Stomach (tissue), 19 donors: ENCODE measurements at regions of chr5 and their contacts with region 1.

Region 1: GRCh38 chr5:172293054-172293744 is 9.6 kb upstream of the UBTD2 start:
- DNase-seq: peak; percentile 68 to 89
- H3K4me3 ChIP-seq: no peak overlapping the region
- H3K27ac ChIP-seq: no peak overlapping the region
- H3K4me1 ChIP-seq: peaks cover 0 to 11% (median 4%) of the 10 kb centered on the region in 4 donors
- H3K27me3 ChIP-seq: no peaks in the 10 kb centered on the region
- CTCF ChIP-seq: peak in 5 of 7 experiments; percentile 61 to 73 (median 67)
- EP300 ChIP-seq: no peak
- POLR2A ChIP-seq: no peak

Region 2: DNA sequence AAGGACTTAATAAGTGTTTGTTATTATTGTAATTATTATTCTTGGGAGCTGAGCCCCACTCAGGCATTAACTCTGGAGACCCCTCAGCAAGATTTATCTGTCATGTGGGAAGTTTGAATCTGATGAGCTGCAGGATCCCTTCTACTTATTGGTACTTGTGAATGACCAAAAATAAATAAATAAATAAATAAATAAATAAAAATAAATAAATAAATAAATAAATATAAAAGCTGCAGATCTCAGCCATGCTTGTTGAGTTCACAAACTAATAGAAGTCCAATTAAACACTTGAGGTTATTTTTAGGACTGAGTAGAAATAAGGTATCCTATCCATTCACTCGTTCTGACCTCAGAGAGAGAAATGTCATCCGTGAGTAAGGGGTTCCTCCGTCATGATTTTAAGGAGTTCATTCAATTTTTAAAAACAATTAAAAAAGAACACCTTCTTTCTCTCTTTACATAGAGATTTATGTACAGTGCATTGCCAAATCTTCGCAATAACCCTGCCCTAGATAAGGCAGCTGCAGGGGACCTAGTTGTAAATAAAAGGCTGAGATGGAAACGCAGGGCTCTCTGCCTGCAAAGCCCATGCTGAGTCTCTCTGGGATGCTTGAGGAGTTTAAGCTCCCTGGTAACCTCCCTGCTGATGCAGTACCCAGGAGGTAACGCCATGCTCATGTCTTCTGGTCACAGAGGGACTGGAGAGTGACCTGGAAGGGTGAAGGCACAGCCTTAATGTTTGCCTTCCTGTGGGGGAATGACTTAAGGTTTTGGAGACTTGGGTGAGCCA is 98.0 kb before region 1 on chr5:
- intact Hi-C with region 1: loop called (anchors 10 kb)
- DNase-seq: no peak
- H3K4me3 ChIP-seq: no peak overlapping the region
- H3K27ac ChIP-seq: no peak overlapping the region
- H3K4me1 ChIP-seq: peaks cover 0 to 4% (median 0%) of the 10 kb centered on the region in 4 donors
- H3K27me3 ChIP-seq: no peaks in the 10 kb centered on the region
- CTCF ChIP-seq: no peak
- EP300 ChIP-seq: no peak
- POLR2A ChIP-seq: no peak

Region 3: DNA sequence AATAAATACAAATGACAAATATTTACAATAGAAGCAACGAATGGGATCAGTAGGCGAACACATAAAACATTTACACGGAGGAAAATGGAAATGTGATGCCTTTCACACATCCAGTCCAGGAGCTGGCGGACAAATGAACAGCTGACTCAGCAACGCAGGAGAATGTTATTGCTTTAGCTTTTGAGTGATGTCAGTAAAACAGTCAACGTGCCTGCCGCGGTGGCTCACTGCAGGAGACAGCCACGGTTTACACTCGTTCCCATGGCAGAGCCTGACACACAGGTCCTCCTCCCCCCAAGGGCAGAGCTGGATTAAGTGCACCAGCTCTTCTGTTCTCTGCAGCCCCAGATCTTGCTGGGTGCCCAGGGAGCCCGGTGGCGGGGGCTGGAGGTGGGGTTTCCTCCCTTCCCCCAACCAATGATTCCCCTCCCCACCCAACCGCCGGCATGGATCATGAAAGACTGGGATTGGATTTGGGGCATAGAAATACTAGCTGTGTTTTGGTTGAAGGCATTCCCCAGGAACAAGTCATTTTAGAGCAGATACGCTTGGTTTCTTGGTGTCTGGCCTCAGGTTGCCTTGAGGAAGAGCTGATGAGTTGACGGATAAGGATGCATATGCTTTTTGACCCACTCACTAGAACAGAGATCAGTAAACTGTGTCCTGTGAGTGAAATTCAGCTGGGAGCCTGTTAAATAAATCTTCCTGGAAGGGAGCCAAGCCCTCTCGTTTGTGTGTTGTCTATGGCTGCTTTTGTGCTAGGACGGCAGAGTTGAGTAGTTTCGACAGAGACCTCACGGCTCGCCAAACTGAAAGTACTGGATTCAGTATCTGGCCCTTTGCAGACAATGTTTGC is 1022.5 kb after region 1 on chr5:
- intact Hi-C with region 1: no loop called
- DNase-seq: peak in 1 of 2 donors; percentile 86
- H3K4me3 ChIP-seq: no peak overlapping the region
- H3K27ac ChIP-seq: peak overlapping the region in 4 of 5 donors; percentile 11 to 60 (median 40)
- H3K4me1 ChIP-seq: peaks cover 3 to 50% (median 35%) of the 10 kb centered on the region in 4 donors
- H3K27me3 ChIP-seq: peaks cover 0 to 32% (median 5%) of the 10 kb centered on the region in 3 donors
- CTCF ChIP-seq: no peak
- EP300 ChIP-seq: no peak
- POLR2A ChIP-seq: no peak

Region 4: DNA sequence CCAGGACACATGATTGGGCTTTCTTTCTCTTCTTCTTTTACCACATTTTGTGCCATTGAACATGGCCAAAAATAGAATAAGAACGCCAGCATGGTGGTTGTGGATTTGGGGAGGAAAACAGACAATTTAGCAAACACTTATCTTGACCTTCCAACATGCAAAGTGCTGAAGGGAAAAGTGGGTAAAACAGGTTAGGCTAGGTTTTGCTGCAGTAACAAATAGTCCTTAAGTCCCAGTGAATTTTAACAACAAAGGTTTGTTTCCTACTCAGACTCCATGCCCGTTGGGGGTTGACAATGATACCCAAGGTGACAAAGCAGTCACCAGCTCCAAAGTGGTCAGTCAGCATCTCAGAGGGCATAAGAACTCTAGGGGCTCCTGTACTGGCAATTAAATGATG is 1078.2 kb after region 1 on chr5:
- intact Hi-C with region 1: no loop called
- DNase-seq: no peak
- H3K4me3 ChIP-seq: no peak overlapping the region
- H3K27ac ChIP-seq: no peak overlapping the region
- H3K4me1 ChIP-seq: no peaks in the 10 kb centered on the region
- H3K27me3 ChIP-seq: no peaks in the 10 kb centered on the region
- CTCF ChIP-seq: no peak
- EP300 ChIP-seq: no peak
- POLR2A ChIP-seq: no peak